Sciatic nerve (tissue), 2 donors: ENCODE measurements at regions of chr17 and their contacts with region 1.

Region 1: DNA sequence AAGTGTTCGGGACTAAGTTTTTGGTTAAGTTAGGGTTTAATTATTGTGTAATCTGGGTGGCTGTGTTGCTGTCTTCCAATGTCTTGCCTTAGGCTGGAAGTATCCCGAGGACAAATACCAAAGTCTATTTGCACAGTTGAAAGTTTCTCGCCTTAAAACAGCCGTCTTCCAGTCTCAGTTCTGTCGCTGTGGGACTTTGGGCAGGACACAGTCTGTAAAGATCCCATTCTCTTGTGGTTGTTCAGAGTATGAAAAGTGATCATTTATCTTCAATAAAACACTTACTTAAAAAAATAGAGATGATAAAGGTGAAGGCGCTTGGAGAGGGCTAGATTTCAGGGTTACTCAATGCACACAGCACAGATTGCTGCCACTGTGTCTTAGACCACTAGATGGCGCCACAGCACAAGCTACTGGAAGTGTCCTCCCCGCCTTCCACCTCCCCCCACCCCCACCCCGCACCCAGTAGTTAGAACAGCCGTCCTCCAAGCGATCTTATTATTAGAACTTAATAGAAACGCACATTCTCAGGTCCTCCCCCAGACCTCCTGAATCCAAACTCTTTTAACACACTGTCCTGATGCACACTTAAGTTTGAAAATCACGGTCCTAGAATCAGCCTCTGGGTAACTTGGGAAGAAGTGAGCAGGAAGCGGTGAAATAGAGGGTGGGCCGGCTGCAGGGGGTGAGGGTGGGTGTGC is 45.9 kb downstream of the AKAP1 start:
- DNase-seq: peak; percentile 92
- ATAC-seq: peak; percentile 95

Region 2: DNA sequence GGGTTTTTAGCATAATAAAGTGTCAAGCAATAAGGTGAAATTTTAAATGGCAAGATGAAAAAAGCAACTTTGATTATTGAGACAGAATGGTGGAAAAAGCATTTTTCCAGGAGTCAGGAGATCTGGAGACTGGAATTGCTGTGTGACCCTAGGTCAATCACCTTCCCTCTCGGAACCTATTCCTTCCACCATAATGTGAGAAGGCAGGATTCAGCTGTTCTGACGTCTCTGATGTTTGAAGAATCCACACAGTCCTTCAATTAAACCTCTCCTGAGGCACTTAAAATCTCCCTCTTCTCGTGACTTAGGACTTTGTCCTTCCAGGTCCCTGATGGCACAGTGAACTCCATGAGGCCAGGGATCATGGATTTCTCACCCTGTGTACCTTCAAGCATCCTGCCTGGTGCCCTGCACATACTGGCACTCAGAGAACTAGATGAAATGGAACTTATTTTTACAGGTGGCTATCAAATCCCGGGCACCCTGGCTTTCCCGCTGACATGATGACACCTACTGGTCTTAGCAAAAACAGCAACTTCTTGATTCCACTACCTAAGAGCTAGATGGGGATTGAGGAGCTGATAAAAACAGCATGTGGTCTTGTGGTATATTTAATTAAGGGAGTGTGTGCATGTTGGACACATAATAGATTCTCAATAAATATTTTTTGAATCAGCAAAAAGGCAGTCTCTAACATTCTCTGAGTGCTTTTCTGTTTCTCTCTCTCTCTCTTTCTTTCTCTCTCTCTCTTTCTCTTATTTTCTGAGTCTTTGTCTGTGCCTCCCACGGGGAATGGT is 616.5 kb after region 1 on chr17:
- intact Hi-C with region 1: loop called (anchors 10 kb)
- DNase-seq: no peak
- ATAC-seq: peak; percentile 39

Region 3: GRCh38 chr17:57833179-57833939 is 702.4 kb after region 1 on chr17:
- intact Hi-C with region 1: loop called (anchors 10 kb)
- DNase-seq: peak; percentile 85
- ATAC-seq: peak; percentile 97

Region 4: DNA sequence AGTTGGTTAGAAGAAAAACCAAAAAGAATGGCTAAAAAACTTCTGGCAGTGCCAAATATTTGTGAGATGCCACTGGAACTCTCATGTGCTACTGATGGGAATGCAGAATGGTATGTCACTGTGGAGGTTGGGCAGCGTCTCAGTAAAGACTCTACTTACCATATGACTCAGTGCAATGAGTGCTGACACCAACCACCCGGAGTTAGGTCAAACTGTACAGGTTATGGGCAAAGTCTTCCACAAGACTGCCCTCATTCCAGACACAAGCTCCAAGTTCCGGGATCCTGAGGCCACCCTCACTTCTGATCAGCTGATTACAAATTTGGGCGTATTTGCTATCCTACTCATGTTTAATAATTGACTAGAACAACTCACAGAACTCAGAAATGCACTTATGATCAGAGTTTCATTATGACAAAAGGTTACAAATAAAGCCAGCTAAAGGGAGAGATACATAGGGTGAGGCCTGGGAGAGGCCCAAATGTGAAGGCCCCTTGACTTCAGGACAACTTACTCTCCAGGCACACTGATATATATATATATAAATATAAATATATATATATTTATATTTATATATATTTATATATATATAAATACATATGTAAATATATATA is 1860.9 kb after region 1 on chr17:
- intact Hi-C with region 1: no loop called
- DNase-seq: no peak
- ATAC-seq: no peak